Motor neuron (in vitro differentiated cells): ENCODE measurements at regions of chr9 and their contacts with region 1.

Region 1: GRCh38 chr9:114291064-114291474 is 31.8 kb upstream of the ORM1 start:
- ATAC-seq: peak; percentile 61 to 83 (median 77)
- H3K4me3 ChIP-seq: no peak overlapping the region
- H3K27ac ChIP-seq: no peak overlapping the region
- H3K4me1 ChIP-seq: peaks cover 5 to 8% of the 10 kb centered on the region in 2 donors

Region 2: GRCh38 chr9:113682297-113682771 is 608.7 kb before region 1 on chr9:
- in situ Hi-C with region 1: loop called in 1 of 9 experiments (anchors 25 kb)
- ATAC-seq: peak in 5 of 8 experiments; percentile 27 to 95 (median 91)
- H3K4me3 ChIP-seq: no peak overlapping the region
- H3K27ac ChIP-seq: no peak overlapping the region
- H3K4me1 ChIP-seq: peaks cover 3 to 7% of the 10 kb centered on the region in 2 donors

Region 3: GRCh38 chr9:113737517-113738271 is 553.4 kb before region 1 on chr9:
- in situ Hi-C with region 1: loop called in 1 of 9 experiments (anchors 25 kb)
- ATAC-seq: peak; percentile 56 to 81 (median 70)
- H3K4me3 ChIP-seq: no peak overlapping the region
- H3K27ac ChIP-seq: no peak overlapping the region
- H3K4me1 ChIP-seq: no peaks in the 10 kb centered on the region

Region 4: GRCh38 chr9:114082017-114082762 is 208.9 kb before region 1 on chr9:
- in situ Hi-C with region 1: loop called in 4 of 9 experiments (anchors 10 to 25 kb)
- ATAC-seq: peak; percentile 96 to 99 (median 98)
- H3K4me3 ChIP-seq: no peak overlapping the region
- H3K27ac ChIP-seq: no peak overlapping the region
- H3K4me1 ChIP-seq: peaks cover 0 to 2% of the 10 kb centered on the region in 2 donors

Region 5: GRCh38 chr9:114108016-114108833 is 182.8 kb before region 1 on chr9:
- in situ Hi-C with region 1: loop called in 5 of 9 experiments (anchors 10 to 25 kb)
- ATAC-seq: peak; percentile 78 to 100 (median 94)
- H3K4me3 ChIP-seq: no peak overlapping the region
- H3K27ac ChIP-seq: no peak overlapping the region
- H3K4me1 ChIP-seq: peaks cover 9 to 14% of the 10 kb centered on the region in 2 donors